K562 (cell line): ENCODE measurements at regions of chr20 and their contacts with region 1.

Region 1: DNA sequence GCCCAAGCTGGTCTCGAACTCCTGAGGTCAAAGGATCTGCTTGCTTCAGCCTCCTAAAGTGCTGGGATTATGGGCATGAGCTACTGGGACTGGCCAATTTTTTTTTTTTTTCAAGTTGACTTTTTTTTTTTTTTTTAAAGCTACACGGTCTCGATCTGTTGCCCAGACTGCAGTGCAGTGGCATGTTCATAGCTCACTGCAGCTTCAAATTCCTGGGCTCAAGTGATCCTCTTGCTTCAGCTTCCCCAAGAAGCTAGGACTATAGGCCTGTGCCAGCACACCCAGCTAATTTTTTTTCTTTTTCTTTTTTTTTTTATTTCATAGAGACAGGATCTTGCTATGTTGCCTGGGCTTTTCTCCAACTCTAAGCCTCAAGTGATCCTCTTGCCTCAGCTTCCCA is 59.5 kb downstream of the NCOA3 start:
- DNase-seq: no peak
- ATAC-seq: no peak
- H3K4me3 ChIP-seq: no peak overlapping the region
- H3K27ac ChIP-seq: no peak overlapping the region
- H3K4me1 ChIP-seq: peaks cover 8 to 30% of the 10 kb centered on the region in 2 experiments; a peak in 3 of 5 replicates
- H3K27me3 ChIP-seq: no peaks in the 10 kb centered on the region
- CTCF ChIP-seq: no peak
- EP300 ChIP-seq: no peak
- POLR2A ChIP-seq: no peak
- RAD21 ChIP-seq: no peak

Region 2: DNA sequence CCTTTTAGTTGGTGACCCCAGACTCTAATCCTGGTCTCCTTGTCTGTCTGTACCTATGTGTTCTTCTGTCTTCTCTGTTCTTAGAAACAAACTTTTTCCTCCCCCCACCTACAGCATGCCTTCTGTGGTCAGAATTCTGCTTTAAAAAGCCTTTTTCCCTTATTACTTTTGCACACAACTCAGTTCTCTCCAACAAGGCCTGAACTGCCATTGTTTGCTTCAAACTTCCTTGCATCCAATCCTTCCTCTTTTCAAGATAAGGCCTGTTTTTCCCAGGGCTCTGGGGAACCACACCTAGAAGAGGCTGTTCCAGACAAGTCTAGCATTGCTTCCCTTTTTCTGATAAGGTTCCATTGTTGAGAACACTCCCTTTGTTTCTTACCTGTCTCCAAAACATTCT is 81.7 kb before region 1 on chr20:
- CTCF ChIA-PET with region 1: no interaction called
- POLR2A ChIA-PET with region 1: no interaction called
- in situ Hi-C with region 1: no loop called
- intact Hi-C with region 1: no loop called
- DNase-seq: peak in 1 of 4 experiments; percentile 18
- ATAC-seq: peak; percentile 45; the same call in 1 of the 3 replicates
- H3K4me3 ChIP-seq: no peak overlapping the region
- H3K27ac ChIP-seq: no peak overlapping the region
- H3K4me1 ChIP-seq: peaks cover 0 to 10% of the 10 kb centered on the region in 2 experiments; a peak in 4 of 5 replicates
- H3K27me3 ChIP-seq: no peaks in the 10 kb centered on the region
- CTCF ChIP-seq: no peak
- EP300 ChIP-seq: no peak
- POLR2A ChIP-seq: no peak
- RAD21 ChIP-seq: no peak

Region 3: GRCh38 chr20:47521059-47521808 is 39.9 kb before region 1 on chr20:
- CTCF ChIA-PET with region 1: no interaction called
- POLR2A ChIA-PET with region 1: no interaction called
- in situ Hi-C with region 1: no loop called
- intact Hi-C with region 1: loop called (anchors 5 kb)
- DNase-seq: peak in 1 of 4 experiments; percentile 30
- ATAC-seq: no peak
- H3K4me3 ChIP-seq: no peak overlapping the region
- H3K27ac ChIP-seq: no peak overlapping the region
- H3K4me1 ChIP-seq: peaks cover 6 to 10% of the 10 kb centered on the region in 2 experiments; a peak in 4 of 5 replicates
- H3K27me3 ChIP-seq: no peaks in the 10 kb centered on the region
- CTCF ChIP-seq: peak; percentile 17 to 44 (median 40); a peak in 3 of 6 replicates
- EP300 ChIP-seq: no peak
- POLR2A ChIP-seq: no peak
- RAD21 ChIP-seq: no peak; a peak in 1 of 4 replicates

Region 4: DNA sequence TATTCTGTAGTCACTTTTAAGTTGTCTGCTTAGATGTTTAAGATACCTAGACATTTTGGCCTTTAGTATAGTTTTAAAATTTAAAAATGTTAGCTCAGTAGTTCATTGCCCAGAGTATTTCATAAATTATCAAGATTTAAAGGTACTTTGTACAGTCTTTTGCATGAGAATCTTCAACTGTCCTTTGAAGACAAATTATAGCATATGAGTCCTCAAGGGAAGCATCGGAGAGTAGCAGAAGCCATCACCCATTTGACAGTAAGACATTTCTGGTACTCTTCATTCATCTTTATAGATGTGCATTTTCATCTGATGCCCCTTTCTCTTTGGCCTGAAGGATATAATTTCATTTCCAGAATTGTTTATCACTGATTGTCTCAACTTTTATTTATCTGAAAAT is 30.1 kb after region 1 on chr20:
- CTCF ChIA-PET with region 1: no interaction called
- POLR2A ChIA-PET with region 1: no interaction called
- in situ Hi-C with region 1: no loop called
- intact Hi-C with region 1: no loop called
- DNase-seq: no peak
- ATAC-seq: no peak
- H3K4me3 ChIP-seq: no peak overlapping the region
- H3K27ac ChIP-seq: no peak overlapping the region
- H3K4me1 ChIP-seq: no peaks in the 10 kb centered on the region
- H3K27me3 ChIP-seq: no peaks in the 10 kb centered on the region
- CTCF ChIP-seq: no peak
- EP300 ChIP-seq: no peak
- POLR2A ChIP-seq: no peak
- RAD21 ChIP-seq: no peak

Region 5: GRCh38 chr20:47682028-47682783 is 121.0 kb after region 1 on chr20:
- CTCF ChIA-PET with region 1: no interaction called
- POLR2A ChIA-PET with region 1: no interaction called
- in situ Hi-C with region 1: no loop called
- intact Hi-C with region 1: no loop called
- DNase-seq: no peak
- ATAC-seq: peak; percentile 29; the same call in 1 of the 3 replicates
- H3K4me3 ChIP-seq: no peak overlapping the region
- H3K27ac ChIP-seq: no peak overlapping the region
- H3K4me1 ChIP-seq: peaks cover 0 to 11% of the 10 kb centered on the region in 2 experiments; a peak in 2 of 5 replicates
- H3K27me3 ChIP-seq: peaks cover 47 to 86% of the 10 kb centered on the region in 2 experiments
- CTCF ChIP-seq: no peak
- EP300 ChIP-seq: no peak
- POLR2A ChIP-seq: no peak
- RAD21 ChIP-seq: peak in 1 of 2 experiments; percentile 18; a peak in 1 of 4 replicates